Calu3 (cell line): ENCODE measurements at regions of chr3 and their contacts with region 1.

Region 1: GRCh38 chr3:134473868-134474546 is 11.8 kb downstream of the ANAPC13 start:
- DNase-seq: peak; percentile 94
- H3K4me3 Mint-ChIP-seq: no peak overlapping the region
- H3K27ac Mint-ChIP-seq: no peak overlapping the region
- H3K4me1 Mint-ChIP-seq: peaks cover 23% of the 10 kb centered on the region
- H3K27me3 Mint-ChIP-seq: no peaks in the 10 kb centered on the region
- CTCF ChIP-seq: peak; percentile 76

Region 2: DNA sequence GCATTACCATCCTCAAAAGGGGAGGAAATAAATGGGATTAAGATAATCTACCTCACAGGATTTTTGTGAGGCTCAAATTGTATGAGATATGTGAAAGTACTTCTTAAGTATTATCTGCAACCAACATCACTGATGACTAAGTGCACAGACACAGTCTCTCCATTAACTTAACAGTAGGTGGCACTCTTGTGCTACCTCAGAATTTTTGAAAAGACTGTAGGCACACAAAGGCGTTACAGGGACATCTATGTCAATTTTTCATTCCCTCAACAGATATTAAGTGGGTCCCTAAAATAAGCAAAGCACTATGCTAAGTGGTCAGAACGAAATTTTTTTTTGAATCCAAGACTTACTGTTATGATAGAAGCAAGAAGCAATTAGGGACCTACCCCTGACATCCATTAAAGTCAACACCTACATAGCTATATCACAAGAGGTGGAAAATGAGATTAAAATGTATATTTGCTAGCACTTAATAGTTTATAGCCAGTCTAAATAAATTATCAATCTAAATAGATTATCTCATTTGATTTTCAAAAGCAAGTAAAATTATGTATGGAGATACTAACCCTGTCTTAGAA is 276.2 kb before region 1 on chr3:
- CTCF ChIA-PET with region 1: interaction called, 4 read pairs
- intact Hi-C with region 1: loop called (anchors 2 kb)
- DNase-seq: peak; percentile 51
- H3K4me3 Mint-ChIP-seq: no peak overlapping the region
- H3K27ac Mint-ChIP-seq: no peak overlapping the region
- H3K4me1 Mint-ChIP-seq: peaks cover 23% of the 10 kb centered on the region
- H3K27me3 Mint-ChIP-seq: no peaks in the 10 kb centered on the region
- CTCF ChIP-seq: peak; percentile 84

Region 3: GRCh38 chr3:134308350-134308891 is 165.6 kb before region 1 on chr3:
- CTCF ChIA-PET with region 1: interaction called, 41 read pairs
- intact Hi-C with region 1: loop called (anchors 1 kb)
- DNase-seq: peak; percentile 95
- H3K4me3 Mint-ChIP-seq: peak overlapping the region; percentile 42
- H3K27ac Mint-ChIP-seq: peak overlapping the region; percentile 18
- H3K4me1 Mint-ChIP-seq: peaks cover 44% of the 10 kb centered on the region
- H3K27me3 Mint-ChIP-seq: peaks cover 14% of the 10 kb centered on the region
- CTCF ChIP-seq: peak; percentile 100

Region 4: GRCh38 chr3:134373994-134374790 is 99.8 kb before region 1 on chr3 and contains the start of gene AMOTL2:
- CTCF ChIA-PET with region 1: interaction called, 17 read pairs
- intact Hi-C with region 1: loop called (anchors 1 kb)
- DNase-seq: peak; percentile 99
- H3K4me3 Mint-ChIP-seq: peak within 1 kb of the TSS; percentile 78
- H3K27ac Mint-ChIP-seq: peak within 1 kb of the TSS; percentile 71
- H3K4me1 Mint-ChIP-seq: peaks cover 78% of the 10 kb centered on the region
- H3K27me3 Mint-ChIP-seq: no peaks in the 10 kb centered on the region
- CTCF ChIP-seq: no peak
- total RNA-seq, gene AMOTL2: 140 and 153 TPM in 2 replicates

Region 5: DNA sequence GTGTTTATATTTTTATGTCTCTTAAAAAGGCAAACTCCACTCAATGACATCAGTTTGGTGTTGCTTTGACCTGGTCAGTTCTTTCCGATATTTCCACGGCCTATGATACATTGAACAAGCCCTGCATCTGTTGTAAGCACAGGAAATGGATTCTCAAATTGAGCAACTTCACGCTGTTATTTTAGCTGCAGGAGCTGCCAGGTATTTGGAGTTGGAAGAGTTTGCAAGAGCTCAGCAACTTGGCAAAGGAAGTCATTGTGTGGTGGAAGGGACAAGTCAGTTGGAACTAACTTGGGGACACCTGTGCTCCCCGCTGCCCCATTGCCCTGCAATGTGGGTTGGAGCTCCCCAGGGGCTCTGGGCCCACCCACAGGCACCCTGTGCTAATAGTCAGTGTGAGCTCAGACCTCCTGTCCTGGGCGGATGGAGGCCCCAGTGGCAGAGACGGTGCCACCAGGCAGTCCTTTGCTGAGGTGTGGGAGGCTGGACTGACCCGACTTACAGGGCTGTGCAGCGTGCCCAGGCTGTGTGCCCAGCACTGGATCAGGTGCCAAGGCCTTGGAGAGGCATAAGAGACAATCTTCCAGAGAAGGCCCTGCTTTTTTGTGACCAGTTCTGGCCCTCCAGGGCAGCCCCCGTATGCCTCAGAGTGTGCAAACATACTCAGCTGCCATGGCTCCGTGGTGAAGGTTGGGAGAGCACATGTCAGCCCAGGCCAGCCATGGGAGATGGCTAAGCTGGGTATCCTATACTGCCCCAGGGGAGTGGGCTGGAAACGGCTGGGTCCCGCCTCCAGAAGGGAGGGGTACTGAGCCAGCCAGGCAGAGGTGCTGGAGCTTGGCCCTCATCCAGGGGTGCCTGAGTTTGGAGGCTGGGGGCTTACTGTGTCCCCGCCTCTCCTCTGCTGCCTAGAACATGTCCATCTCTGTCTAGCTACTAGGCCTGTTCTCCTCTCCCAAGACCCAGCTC is 133.3 kb after region 1 on chr3:
- CTCF ChIA-PET with region 1: no interaction called
- intact Hi-C with region 1: no loop called
- DNase-seq: no peak
- H3K4me3 Mint-ChIP-seq: no peak overlapping the region
- H3K27ac Mint-ChIP-seq: no peak overlapping the region
- H3K4me1 Mint-ChIP-seq: no peaks in the 10 kb centered on the region
- H3K27me3 Mint-ChIP-seq: peaks cover 90% of the 10 kb centered on the region
- CTCF ChIP-seq: no peak